ENCODE measurements at regions of chr14 and their contacts with region 1.

Region 1: GRCh38 chr14:22472935-22473854 is 115.8 kb downstream of the DAD1 start:
- DNase-seq: no peak
- H3K4me3 ChIP-seq: no peak overlapping the region
- H3K27ac ChIP-seq: no peak overlapping the region
- H3K4me1 ChIP-seq: peaks cover 0 to 3% of the 10 kb centered on the region in 2 donors
- H3K27me3 ChIP-seq: no peaks in the 10 kb centered on the region
- CTCF ChIP-seq: peak in 1 of 3 experiments; percentile 53

Region 2: DNA sequence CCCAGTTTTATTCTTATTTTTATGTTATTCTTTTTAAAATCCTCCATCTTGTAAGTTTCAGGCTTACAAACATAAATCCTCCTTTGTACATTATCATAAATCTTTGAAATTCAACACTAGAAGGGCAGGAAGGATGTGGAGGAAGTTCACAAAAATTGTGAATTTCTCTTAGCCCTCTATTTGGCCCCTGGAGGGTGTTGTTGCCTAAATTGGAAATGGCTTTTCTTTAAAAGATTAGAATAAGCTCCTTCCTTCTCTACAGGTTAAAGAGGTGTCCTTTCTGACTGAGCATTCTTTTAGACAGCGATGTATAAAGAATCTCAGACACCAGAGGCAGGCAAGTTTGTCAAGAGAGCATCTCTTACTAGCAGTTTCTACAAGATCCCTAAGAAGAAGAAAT is 407.8 kb before region 1 on chr14:
- intact Hi-C with region 1: no loop called
- DNase-seq: no peak
- H3K4me3 ChIP-seq: no peak overlapping the region
- H3K27ac ChIP-seq: no peak overlapping the region
- H3K4me1 ChIP-seq: no peaks in the 10 kb centered on the region
- H3K27me3 ChIP-seq: no peaks in the 10 kb centered on the region
- CTCF ChIP-seq: no peak

Region 3: DNA sequence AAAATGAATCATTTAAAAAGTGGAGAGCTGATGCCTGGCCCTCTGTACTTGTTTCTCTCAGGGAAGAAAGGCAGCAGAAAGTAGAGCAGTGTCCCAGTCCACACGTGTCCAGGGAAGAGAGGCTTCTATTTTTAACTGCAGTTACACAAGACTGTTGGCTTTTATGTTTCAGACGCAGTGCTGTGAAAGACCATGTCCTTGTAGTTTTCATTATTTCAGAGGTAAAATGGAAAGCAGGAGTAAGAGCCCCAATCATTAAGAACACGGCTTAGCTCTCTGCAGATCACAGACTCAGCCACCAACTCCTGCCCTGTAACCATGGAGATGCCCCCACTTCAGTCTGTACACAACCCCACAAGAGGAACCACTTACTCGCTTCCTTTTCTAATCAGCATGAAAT is 220.5 kb before region 1 on chr14:
- intact Hi-C with region 1: no loop called
- DNase-seq: no peak
- H3K4me3 ChIP-seq: peak overlapping the region in 1 of 2 donors; percentile 6
- H3K27ac ChIP-seq: no peak overlapping the region
- H3K4me1 ChIP-seq: no peaks in the 10 kb centered on the region
- H3K27me3 ChIP-seq: no peaks in the 10 kb centered on the region
- CTCF ChIP-seq: no peak

Region 4: GRCh38 chr14:22333422-22334276 is 139.5 kb before region 1 on chr14:
- intact Hi-C with region 1: no loop called
- DNase-seq: no peak
- H3K4me3 ChIP-seq: no peak overlapping the region
- H3K27ac ChIP-seq: no peak overlapping the region
- H3K4me1 ChIP-seq: peaks cover 0 to 3% of the 10 kb centered on the region in 2 donors
- H3K27me3 ChIP-seq: no peaks in the 10 kb centered on the region
- CTCF ChIP-seq: no peak

Region 5: GRCh38 chr14:22502007-22502406 is 28.8 kb after region 1 on chr14:
- intact Hi-C with region 1: loop called (anchors 1 kb)
- DNase-seq: no peak
- H3K4me3 ChIP-seq: no peak overlapping the region
- H3K27ac ChIP-seq: peak overlapping the region in 1 of 2 donors; percentile 55
- H3K4me1 ChIP-seq: peaks cover 0 to 6% of the 10 kb centered on the region in 2 donors
- H3K27me3 ChIP-seq: no peaks in the 10 kb centered on the region
- CTCF ChIP-seq: no peak

Region 6: DNA sequence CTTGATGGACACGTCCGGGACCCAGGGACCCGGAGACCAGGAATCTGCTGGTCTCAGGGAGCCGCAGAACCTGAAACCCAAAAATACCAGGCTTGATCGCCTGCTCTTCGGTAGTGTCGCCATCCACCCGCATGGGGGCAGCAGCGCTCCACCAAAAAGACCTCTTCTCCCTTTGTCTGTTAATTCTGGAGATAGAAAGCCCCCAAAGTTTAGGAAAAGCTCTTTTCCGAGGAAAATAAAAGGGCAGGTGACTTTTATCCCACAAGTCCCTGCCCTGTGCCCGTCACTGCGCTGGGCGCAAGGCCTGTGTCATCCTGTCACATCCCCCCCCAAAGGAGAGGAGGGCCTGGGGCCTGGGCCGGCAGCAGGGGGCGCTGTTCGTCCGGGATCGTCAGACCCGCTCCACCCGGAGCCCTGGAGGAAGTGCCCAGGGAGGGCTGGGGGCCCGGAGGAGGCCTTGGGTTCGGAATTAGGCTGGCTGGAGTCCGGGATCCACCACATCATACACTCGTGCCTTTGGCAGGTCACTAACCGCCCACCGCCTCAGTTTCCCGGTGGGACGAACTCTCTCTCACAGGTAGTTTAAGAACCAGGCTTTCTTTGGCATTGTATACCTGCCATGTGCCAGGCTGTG is 83.9 kb after region 1 on chr14:
- intact Hi-C with region 1: no loop called
- DNase-seq: peak in 1 of 2 donors; percentile 88
- H3K4me3 ChIP-seq: peak overlapping the region; percentile 50 to 54
- H3K27ac ChIP-seq: peak overlapping the region; percentile 53 to 60
- H3K4me1 ChIP-seq: peaks cover 0 to 11% of the 10 kb centered on the region in 2 donors
- H3K27me3 ChIP-seq: no peaks in the 10 kb centered on the region
- CTCF ChIP-seq: peak; percentile 91 to 100 (median 99)